ENCODE measurements at regions of chr16 and their contacts with region 1.

Region 1: DNA sequence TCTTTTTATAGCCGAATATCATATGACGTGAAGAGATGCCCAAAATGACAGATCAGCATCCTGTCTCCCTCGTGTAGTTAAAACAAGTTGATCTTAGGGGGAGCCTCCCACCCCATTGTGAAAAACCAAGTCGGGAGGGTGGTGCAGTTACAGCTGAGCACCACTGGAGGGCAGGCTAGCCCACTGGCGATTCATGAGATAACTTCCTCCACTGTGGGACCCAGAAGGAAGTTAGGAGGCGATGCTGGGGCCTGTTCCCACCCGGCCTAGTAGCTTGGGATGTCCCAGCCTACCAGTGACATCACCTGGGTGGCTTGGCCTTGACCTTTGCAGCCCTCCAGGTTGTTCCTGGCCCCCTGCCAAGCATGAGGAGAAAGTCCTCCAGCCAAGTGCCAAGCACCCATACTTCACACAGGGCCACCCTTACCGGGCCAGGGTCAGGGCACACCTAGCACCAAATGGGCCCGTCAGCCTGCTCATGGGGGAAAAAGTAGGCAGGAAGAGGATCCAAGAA is 8.1 kb upstream of the CPNE2 start:
- DNase-seq: peak; percentile 73 to 80 (median 77)
- ATAC-seq: peak; percentile 90
- H3K4me3 ChIP-seq: no peak overlapping the region
- H3K4me1 ChIP-seq: peaks cover 3% of the 10 kb centered on the region
- CTCF ChIP-seq: peak; percentile 97

Region 2: DNA sequence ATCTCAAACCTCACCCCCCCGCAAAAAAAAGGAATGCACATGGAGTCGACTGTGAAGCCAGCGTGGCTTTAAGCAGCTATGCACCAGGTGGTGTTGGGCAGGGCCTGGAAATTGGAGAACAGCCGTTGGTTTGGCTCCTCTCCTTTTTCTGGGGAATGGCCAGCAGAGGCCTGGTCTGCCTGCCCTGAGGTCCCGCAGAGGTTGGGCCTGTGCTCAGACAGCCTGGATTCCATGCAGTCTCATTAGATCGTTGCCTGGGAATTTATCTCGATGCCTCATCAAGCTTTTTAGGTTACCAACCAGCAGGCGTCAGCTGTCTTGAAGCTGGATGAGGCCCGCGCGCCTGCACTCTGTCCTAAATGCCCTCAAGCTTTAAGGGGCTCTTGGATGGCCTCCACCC is 209.5 kb before region 1 on chr16:
- intact Hi-C with region 1: no loop called
- DNase-seq: no peak
- ATAC-seq: no peak
- H3K4me3 ChIP-seq: no peak overlapping the region
- H3K4me1 ChIP-seq: no peaks in the 10 kb centered on the region
- CTCF ChIP-seq: no peak

Region 3: GRCh38 chr16:57167953-57168352 is 83.6 kb after region 1 on chr16:
- intact Hi-C with region 1: loop called in 1 of 2 experiments (anchors 10 kb)
- DNase-seq: no peak
- ATAC-seq: peak; percentile 80
- H3K4me3 ChIP-seq: no peak overlapping the region
- H3K4me1 ChIP-seq: no peaks in the 10 kb centered on the region
- CTCF ChIP-seq: no peak

Measured in mucosa of descending colon (tissue), 3 donors.